Ascending aorta (tissue), 2 donors: ENCODE measurements at regions of chr9 and their contacts with region 1.

Region 1: DNA sequence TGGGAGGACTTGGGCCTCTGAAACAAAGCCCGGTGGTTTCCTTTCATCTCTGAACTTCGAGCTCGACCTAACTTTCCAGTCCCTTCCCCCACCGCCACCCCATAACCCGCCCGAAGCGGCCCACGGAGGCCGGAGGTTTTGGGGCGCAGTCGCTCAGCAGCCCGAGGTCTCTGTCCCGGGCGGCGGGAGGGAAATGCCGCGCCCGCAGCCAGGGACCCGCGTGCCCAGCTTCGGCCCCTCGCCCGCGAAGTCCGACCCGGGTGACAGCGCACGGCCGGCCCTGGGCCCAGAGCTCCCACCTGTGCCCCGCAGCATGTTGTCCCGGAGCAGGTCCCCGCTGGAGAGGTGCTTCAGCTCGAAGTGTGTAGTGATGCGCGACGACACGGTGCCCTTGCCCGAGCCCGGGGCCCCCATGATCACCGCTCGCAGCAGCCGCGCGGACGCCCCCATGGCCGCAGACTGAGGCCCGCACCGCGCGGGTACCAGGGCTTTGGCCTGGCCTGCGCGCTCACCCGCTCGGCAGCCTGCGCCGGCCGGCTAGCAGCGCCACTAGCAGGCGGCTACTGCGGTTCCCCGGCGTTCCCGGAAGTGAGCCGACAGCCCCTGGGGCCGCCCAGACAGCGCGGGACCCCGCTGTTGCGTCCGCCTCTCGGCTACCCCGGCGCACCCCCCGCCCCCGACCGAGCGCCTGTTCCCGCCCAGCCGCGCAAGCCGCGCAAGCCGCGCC is at the start of gene AK3:
- DNase-seq: peak; percentile 29 to 92
- H3K4me3 ChIP-seq: peak within 1 kb of the TSS; percentile 76 to 88
- H3K27ac ChIP-seq: peak within 1 kb of the TSS; percentile 86 to 87
- H3K4me1 ChIP-seq: peaks cover 3 to 17% of the 10 kb centered on the region in 2 donors
- H3K27me3 ChIP-seq: no peaks in the 10 kb centered on the region
- CTCF ChIP-seq: peak in 2 of 3 experiments; percentile 18 to 41
- total RNA-seq, gene AK3: 37.1 TPM

Region 2: DNA sequence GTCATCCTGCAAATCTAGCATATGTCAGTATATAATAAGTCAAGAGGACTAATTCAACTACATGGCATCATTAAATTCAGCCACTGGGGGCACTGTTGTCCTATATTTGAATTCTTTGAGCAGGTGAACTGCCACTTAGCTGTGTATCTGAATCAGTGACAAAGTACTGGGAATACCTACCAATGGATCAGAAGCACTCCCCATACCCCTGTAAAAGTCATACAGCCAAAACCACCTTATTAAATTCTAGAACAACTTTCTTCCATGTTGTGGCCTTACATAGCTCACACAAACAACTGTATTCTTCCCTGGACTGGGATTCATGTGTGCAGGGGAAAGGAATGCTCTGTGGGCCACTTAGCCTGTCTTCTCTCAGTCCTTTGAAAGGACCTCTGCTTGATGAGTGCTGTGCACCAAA is 136.1 kb before region 1 on chr9:
- intact Hi-C with region 1: loop called (anchors 5 kb)
- DNase-seq: peak in 1 of 2 donors; percentile 79
- H3K4me3 ChIP-seq: no peak overlapping the region
- H3K27ac ChIP-seq: no peak overlapping the region
- H3K4me1 ChIP-seq: no peaks in the 10 kb centered on the region
- H3K27me3 ChIP-seq: no peaks in the 10 kb centered on the region
- CTCF ChIP-seq: peak; percentile 41 to 65 (median 52)

Region 3: GRCh38 chr9:4662108-4662988 is 78.5 kb before region 1 on chr9 and contains the start of gene PLPP6:
- intact Hi-C with region 1: loop called (anchors 1 kb)
- DNase-seq: peak; percentile 59 to 95
- H3K4me3 ChIP-seq: peak within 1 kb of the TSS; percentile 66 to 86
- H3K27ac ChIP-seq: peak within 1 kb of the TSS; percentile 82 to 87
- H3K4me1 ChIP-seq: peaks cover 7 to 16% of the 10 kb centered on the region in 2 donors
- H3K27me3 ChIP-seq: no peaks in the 10 kb centered on the region
- CTCF ChIP-seq: peak; percentile 33 to 67 (median 45)
- total RNA-seq, gene PLPP6: 19.2 TPM

Region 4: DNA sequence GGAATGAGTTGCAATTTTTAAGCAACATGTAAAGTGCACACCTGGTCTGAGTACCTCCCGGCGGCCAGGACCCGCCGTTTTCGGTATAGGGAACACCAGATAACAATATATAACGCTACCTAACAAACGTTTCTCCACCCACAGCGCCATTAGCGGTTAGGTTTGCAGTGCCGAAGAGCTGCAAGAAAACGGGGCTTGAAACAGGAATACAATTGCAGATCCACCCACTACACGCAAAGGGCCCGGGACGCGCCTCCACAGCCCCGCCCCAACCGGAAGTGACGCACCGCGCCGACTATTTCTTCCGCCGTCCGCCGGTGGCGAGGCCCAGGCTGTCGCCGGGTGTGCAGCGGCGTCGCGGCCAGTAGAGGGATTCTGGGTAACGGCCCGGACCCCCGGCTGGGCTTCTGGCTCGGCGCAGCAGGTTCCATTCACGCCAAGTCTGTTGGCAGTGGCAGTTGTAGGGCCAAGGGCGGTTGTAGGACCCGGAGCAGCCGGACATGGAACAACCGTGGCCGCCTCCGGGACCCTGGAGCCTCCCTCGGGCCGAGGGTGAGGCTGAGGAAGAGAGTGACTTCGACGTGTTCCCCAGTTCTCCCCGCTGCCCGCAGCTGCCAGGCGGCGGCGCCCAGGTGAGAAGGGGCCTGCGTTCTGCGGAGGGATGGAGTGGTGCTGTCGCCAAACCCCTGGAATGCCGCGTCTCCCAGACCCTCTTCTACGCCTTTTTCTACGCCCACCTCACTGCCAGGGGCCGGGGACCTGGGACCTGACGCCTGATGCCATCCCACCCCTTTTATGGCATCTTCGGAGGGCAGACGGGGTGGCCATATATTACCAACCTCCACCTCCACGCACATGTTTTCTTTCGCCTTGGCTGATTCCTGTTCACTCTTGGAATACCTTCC is 61.3 kb before region 1 on chr9 and contains the start of gene CDC37L1:
- intact Hi-C with region 1: loop called (anchors 1 kb)
- DNase-seq: peak; percentile 87 to 99
- H3K4me3 ChIP-seq: peak within 1 kb of the TSS; percentile 79 to 91
- H3K27ac ChIP-seq: peak within 1 kb of the TSS; percentile 97 to 98
- H3K4me1 ChIP-seq: peaks cover 0 to 16% of the 10 kb centered on the region in 2 donors
- H3K27me3 ChIP-seq: no peaks in the 10 kb centered on the region
- CTCF ChIP-seq: peak; percentile 61 to 76 (median 76)
- total RNA-seq, gene CDC37L1: 17.2 TPM